WTC11 (cell line): ENCODE measurements at regions of chr6 and their contacts with region 1.

Region 1: GRCh38 chr6:32868257-32868788 is 14.3 kb downstream of the PSMB9 start:
- DNase-seq: peak; percentile 79
- ATAC-seq: peak; percentile 50
- H3K4me3 Mint-ChIP-seq: no peak overlapping the region
- H3K27ac Mint-ChIP-seq: no peak overlapping the region
- H3K4me1 Mint-ChIP-seq: no peaks in the 10 kb centered on the region
- H3K27me3 Mint-ChIP-seq: peaks cover 16% of the 10 kb centered on the region
- CTCF ChIP-seq: peak; percentile 86

Region 2: GRCh38 chr6:32603888-32604287 is 264.4 kb before region 1 on chr6:
- CTCF ChIA-PET with region 1: no interaction called
- POLR2A ChIA-PET with region 1: no interaction called
- DNase-seq: no peak
- ATAC-seq: no peak
- H3K4me3 Mint-ChIP-seq: no peak overlapping the region
- H3K27ac Mint-ChIP-seq: no peak overlapping the region
- H3K4me1 Mint-ChIP-seq: no peaks in the 10 kb centered on the region
- H3K27me3 Mint-ChIP-seq: peaks cover 23% of the 10 kb centered on the region
- CTCF ChIP-seq: no peak

Region 3: DNA sequence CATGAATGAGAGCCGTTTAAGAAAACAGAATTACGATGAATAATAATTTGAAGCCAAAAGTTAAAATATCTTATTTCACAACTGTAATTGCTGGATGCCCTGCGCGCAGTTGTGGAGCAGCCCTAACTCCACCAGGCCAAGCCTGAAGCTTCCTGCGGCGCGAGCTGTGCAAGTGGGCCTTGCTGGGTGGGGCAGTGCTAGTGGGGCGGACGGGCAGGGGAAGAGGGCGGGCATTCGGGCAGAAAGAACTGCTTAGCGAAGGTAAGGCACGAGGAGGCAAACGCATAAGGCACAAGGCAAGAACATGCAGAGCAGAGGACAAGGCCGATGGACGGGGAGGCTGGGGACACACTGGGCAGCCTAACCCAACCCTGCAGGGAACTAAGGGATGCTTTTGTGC is 107.3 kb before region 1 on chr6:
- CTCF ChIA-PET with region 1: no interaction called
- POLR2A ChIA-PET with region 1: no interaction called
- DNase-seq: no peak
- ATAC-seq: no peak
- H3K4me3 Mint-ChIP-seq: no peak overlapping the region
- H3K27ac Mint-ChIP-seq: no peak overlapping the region
- H3K4me1 Mint-ChIP-seq: peaks cover 12% of the 10 kb centered on the region
- H3K27me3 Mint-ChIP-seq: peaks cover 27% of the 10 kb centered on the region
- CTCF ChIP-seq: no peak

Region 4: GRCh38 chr6:32819729-32820128 is 48.6 kb before region 1 on chr6:
- CTCF ChIA-PET with region 1: interaction called, 67 read pairs
- POLR2A ChIA-PET with region 1: no interaction called
- DNase-seq: no peak
- ATAC-seq: no peak
- H3K4me3 Mint-ChIP-seq: no peak overlapping the region
- H3K27ac Mint-ChIP-seq: no peak overlapping the region
- H3K4me1 Mint-ChIP-seq: no peaks in the 10 kb centered on the region
- H3K27me3 Mint-ChIP-seq: peaks cover 4% of the 10 kb centered on the region
- CTCF ChIP-seq: no peak

Region 5: GRCh38 chr6:32843979-32844838 is 24.1 kb before region 1 on chr6 and contains the start of gene PSMB8:
- CTCF ChIA-PET with region 1: interaction called, 243 read pairs
- POLR2A ChIA-PET with region 1: interaction called, 7 read pairs
- DNase-seq: peak; percentile 96
- ATAC-seq: peak; percentile 93
- H3K4me3 Mint-ChIP-seq: peak within 1 kb of the TSS; percentile 95
- H3K27ac Mint-ChIP-seq: peak within 1 kb of the TSS; percentile 78
- H3K4me1 Mint-ChIP-seq: peaks cover 17% of the 10 kb centered on the region
- H3K27me3 Mint-ChIP-seq: peaks cover 94% of the 10 kb centered on the region
- CTCF ChIP-seq: no peak
- total RNA-seq, gene PSMB8: 13.8 to 22.0 TPM (median 19.4 TPM) in 3 replicates

Region 6: GRCh38 chr6:32879691-32880090 is 11.4 kb after region 1 on chr6:
- CTCF ChIA-PET with region 1: interaction called, 21 read pairs
- POLR2A ChIA-PET with region 1: no interaction called
- DNase-seq: no peak
- ATAC-seq: no peak
- H3K4me3 Mint-ChIP-seq: no peak overlapping the region
- H3K27ac Mint-ChIP-seq: no peak overlapping the region
- H3K4me1 Mint-ChIP-seq: no peaks in the 10 kb centered on the region
- H3K27me3 Mint-ChIP-seq: peaks cover 12% of the 10 kb centered on the region
- CTCF ChIP-seq: no peak